ENCODE measurements at regions of chr12 and their contacts with region 1.

Region 1: DNA sequence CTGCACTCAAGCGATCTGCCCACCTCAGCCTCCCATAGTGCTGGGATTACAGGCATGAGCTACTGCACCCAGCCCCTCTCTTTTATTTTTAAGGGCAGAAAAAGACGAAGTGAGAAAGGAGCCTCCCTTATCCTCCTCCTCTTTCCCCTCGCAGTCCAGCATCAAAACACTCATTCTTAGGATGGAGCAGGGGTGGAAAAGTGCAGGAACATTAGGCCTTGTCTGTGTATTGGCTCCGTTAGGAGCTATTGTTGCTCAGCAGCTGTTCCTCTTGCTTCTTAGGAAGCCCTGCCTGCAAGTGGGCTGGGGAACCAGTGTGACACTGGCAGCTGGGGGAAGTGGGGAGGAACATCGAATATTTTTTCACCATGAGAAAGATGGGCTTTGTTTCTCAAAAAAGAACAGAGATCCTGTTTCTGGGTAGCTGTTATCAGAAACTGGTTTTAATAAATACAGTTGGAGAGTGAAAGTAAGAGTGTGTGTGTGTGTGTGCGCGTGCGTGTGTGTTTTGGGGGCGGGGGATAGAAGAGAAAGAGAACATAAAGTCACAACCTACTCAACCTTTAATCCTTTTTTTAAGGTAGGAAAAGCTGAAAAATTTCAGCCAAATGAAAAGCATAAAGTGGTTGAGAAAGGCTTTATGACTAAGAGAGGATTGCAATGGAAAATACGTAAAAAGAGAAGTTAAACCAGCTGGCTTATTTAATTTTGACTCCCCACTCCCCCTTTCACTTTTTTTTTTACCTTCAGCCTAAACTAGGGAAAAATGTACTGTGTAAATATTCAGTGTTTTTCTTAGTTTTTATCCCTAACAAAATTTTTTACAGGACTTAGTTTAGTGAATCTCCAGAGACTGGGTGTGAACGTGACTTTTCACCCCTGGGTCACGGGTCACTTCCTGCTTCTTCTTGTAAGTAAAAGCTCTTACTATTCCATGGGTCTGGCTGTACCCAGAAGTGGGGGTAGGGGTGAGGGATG is 197.2 kb upstream of the PLEKHG7 start:
- DNase-seq: peak; percentile 73
- H3K4me3 ChIP-seq: peak overlapping the region; percentile 55
- H3K27ac ChIP-seq: peak overlapping the region; percentile 79
- H3K4me1 ChIP-seq: peaks cover 53% of the 10 kb centered on the region
- CTCF ChIP-seq: no peak

Region 2: GRCh38 chr12:92466391-92467305 is 38.9 kb before region 1 on chr12:
- CTCF ChIA-PET with region 1: no interaction called
- POLR2A ChIA-PET with region 1: interaction called, 21 read pairs
- intact Hi-C with region 1: loop called (anchors 2 kb)
- DNase-seq: peak; percentile 92
- H3K4me3 ChIP-seq: peak overlapping the region; percentile 70
- H3K27ac ChIP-seq: peak overlapping the region; percentile 98
- H3K4me1 ChIP-seq: peaks cover 83% of the 10 kb centered on the region
- CTCF ChIP-seq: no peak; the same call in 1 of the 2 replicates

Region 3: DNA sequence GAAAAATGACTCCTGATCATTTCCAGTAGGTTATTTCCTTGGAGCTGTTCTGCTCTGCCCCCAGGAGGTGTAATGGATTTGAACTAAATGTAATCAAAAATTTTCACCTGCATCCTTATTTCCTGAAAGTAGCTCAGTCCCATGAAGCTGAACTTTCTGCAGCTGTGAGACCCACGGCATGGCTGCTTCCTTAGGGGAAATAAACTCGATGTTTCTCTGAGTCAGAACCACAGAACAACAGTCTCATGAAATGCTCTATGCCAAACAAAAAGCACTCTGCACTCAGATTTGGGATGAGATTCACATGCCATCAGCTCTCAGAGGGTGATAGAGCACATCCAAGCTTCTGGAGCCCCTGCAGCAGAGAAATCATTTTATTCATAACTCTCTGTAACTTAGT is 26.9 kb before region 1 on chr12:
- CTCF ChIA-PET with region 1: interaction called, 4 read pairs
- POLR2A ChIA-PET with region 1: interaction called, 37 read pairs
- intact Hi-C with region 1: no loop called
- DNase-seq: no peak
- H3K4me3 ChIP-seq: no peak overlapping the region
- H3K27ac ChIP-seq: no peak overlapping the region
- H3K4me1 ChIP-seq: peaks cover 35% of the 10 kb centered on the region
- CTCF ChIP-seq: no peak

Region 4: GRCh38 chr12:92516277-92516600 is 10.7 kb after region 1 on chr12:
- CTCF ChIA-PET with region 1: no interaction called
- POLR2A ChIA-PET with region 1: interaction called, 36 read pairs
- intact Hi-C with region 1: no loop called
- DNase-seq: no peak
- H3K4me3 ChIP-seq: no peak overlapping the region
- H3K27ac ChIP-seq: no peak overlapping the region
- H3K4me1 ChIP-seq: no peaks in the 10 kb centered on the region
- CTCF ChIP-seq: no peak

Region 5: GRCh38 chr12:92556141-92556540 is 50.6 kb after region 1 on chr12:
- CTCF ChIA-PET with region 1: no interaction called
- POLR2A ChIA-PET with region 1: interaction called, 14 read pairs
- intact Hi-C with region 1: no loop called
- DNase-seq: peak; percentile 21
- H3K4me3 ChIP-seq: no peak overlapping the region
- H3K27ac ChIP-seq: no peak overlapping the region
- H3K4me1 ChIP-seq: peaks cover 40% of the 10 kb centered on the region
- CTCF ChIP-seq: no peak

Region 6: DNA sequence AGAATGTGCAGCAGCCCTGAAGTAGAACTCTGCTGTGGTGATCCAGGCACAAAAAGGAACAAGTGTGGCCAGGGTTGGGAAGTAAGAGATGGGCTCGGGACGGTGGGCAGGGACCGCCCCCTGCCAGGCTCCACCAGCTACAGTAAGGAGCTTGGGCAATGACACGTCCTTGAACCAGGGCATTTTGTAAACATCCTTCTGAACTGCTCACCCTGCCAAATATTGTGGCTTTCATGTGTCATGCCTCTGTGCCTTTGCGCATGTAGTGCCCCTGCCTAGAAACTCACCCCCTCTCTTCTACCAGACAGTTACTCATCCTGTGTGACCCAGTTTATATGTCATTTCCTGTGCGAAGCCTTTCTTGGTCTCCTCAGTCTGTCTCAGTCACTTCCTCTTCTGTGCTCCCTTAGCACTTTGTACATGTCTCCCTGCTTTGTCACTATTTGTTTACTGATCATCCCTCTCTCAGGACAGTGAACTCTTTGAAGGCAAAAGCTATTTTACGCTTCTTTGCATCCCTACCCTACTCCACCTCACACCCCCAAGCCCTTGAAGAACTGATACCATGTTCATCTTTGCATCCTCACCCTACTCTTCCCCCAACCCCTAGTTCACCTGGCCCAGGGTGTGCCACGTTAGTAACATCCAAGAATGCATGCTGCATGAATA is 88.3 kb after region 1 on chr12:
- CTCF ChIA-PET with region 1: no interaction called
- POLR2A ChIA-PET with region 1: no interaction called
- intact Hi-C with region 1: no loop called
- DNase-seq: peak; percentile 84
- H3K4me3 ChIP-seq: peak overlapping the region; percentile 45
- H3K27ac ChIP-seq: peak overlapping the region; percentile 64
- H3K4me1 ChIP-seq: peaks cover 28% of the 10 kb centered on the region
- CTCF ChIP-seq: no peak

Region 7: DNA sequence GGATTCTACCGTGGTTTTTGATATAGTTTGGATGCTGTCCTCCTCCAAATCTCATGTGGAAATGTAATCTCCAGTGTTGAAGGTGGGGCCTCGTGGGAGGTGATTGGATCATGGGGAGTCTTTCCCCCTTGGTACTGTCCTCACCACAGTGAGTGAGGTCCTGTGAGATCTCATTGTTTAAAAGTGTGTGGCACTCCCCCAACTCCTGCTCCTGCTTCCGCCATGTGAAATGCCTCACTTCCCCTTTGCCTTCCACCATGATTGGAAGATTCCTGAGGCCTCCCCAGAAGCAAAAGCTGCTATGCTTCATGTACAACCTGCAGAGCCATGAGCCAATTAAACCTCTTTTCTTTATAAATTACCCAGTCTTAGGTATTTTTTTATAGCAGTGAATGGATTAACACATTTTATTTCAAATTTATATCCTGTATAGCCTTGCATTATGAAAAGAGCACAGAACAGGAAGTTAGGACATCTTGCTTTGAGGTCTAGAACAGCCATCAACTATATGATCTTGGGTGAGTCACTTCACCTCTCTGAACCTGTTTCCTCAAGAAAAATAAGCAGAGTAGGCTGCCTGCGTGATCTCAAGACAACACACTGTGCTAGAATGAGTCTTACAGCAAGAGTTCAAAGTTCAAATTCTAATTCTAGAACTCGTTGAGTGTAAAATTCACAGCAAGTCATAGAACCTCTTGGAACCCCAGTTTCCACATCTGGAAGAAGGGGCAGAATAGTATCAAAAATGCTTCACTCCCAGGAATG is 584.4 kb after region 1 on chr12:
- CTCF ChIA-PET with region 1: no interaction called
- POLR2A ChIA-PET with region 1: no interaction called
- intact Hi-C with region 1: no loop called
- DNase-seq: no peak
- H3K4me3 ChIP-seq: no peak overlapping the region
- H3K27ac ChIP-seq: no peak overlapping the region
- H3K4me1 ChIP-seq: no peaks in the 10 kb centered on the region
- CTCF ChIP-seq: no peak